Transverse colon (tissue), 4 donors: ENCODE measurements at regions of chr3 and their contacts with region 1.

Region 1: GRCh38 chr3:3792371-3792770 is 6.9 kb upstream of the LRRN1 start:
- DNase-seq: no peak
- H3K4me3 ChIP-seq: no peak overlapping the region
- H3K27ac ChIP-seq: no peak overlapping the region
- H3K4me1 ChIP-seq: no peaks in the 10 kb centered on the region
- H3K27me3 ChIP-seq: peaks cover 7% of the 10 kb centered on the region
- CTCF ChIP-seq: no peak
- EP300 ChIP-seq: no peak
- POLR2A ChIP-seq: no peak

Region 2: DNA sequence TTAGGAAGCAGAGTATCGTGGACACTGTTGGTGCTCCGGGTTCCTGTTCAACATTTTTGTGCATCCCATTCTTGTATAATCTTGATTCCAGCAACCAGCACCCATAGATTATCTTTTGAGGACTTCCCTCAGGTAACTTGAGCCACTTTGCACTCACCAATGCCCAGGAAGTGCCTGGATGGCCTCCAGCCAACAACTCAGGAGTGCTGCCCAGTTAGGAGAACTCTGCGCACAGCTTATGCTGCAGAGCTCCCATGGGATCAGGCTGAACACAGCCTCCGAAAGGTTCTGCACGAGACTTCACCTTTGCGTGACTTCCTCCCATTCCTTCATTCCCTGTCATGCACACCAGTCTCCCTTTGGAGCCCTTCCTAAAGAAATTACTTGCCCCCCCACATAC is 57.5 kb before region 1 on chr3:
- in situ Hi-C with region 1: no loop called
- intact Hi-C with region 1: loop called (anchors 2 kb)
- DNase-seq: no peak
- H3K4me3 ChIP-seq: no peak overlapping the region
- H3K27ac ChIP-seq: no peak overlapping the region
- H3K4me1 ChIP-seq: no peaks in the 10 kb centered on the region
- H3K27me3 ChIP-seq: no peaks in the 10 kb centered on the region
- CTCF ChIP-seq: no peak
- EP300 ChIP-seq: no peak
- POLR2A ChIP-seq: no peak